Common myeloid progenitor, CD34-positive (primary cell): ENCODE measurements at regions of chr15 and their contacts with region 1.

Region 1: GRCh38 chr15:44711356-44712107 is at the start of gene B2M:
- DNase-seq: peak; percentile 97 to 99 (median 99)
- H3K4me3 ChIP-seq: peak within 1 kb of the TSS; percentile 83 to 100 (median 94)
- H3K27ac ChIP-seq: peak within 1 kb of the TSS; percentile 97 to 99
- H3K4me1 ChIP-seq: peaks cover 18 to 49% (median 29%) of the 10 kb centered on the region in 4 experiments
- H3K27me3 ChIP-seq: no peaks in the 10 kb centered on the region

Region 2: DNA sequence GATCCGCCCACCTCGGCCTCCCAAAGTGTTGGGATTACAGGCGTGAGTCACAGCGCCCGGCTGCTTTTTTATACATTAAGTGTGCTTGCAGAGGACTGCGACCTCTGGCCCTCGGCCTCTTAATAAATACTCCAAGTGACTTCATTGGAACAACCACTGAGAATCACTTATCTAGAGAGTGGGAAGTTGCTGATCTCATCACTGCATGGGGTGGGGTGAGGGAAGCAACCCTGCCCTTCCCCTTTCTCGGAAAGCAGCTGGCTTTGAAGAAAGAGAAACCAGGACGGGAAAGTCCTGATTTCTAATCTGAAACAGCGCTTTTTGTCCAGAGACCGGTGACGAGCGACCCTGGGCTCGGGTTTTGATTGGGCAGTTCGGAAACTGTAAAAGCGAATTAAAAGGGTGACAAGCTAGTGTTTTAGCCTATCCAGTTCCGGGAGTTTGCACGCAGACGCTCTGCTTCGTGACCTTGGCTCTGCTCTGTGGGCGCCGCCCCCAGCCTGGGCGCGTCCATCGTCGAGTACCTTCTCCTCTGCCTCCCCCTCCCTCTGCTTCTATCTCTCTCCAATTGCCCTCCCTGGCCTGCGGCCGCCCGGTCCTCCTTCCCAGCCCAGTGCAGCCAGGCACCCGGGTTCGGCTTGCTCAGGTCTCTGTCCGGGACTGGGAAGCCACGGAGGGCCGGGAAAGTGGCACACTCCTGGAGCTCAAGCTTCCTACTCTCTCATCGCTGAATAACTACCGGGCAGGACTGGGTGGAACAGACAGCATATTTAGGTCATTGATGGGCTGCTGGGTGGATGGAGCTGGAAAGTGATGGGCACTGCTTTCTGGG is 17.3 kb after region 1 on chr15:
- CTCF ChIA-PET with region 1: interaction called, 93 read pairs
- POLR2A ChIA-PET with region 1: interaction called, 106 read pairs
- DNase-seq: peak; percentile 98 to 99 (median 99)
- H3K4me3 ChIP-seq: peak overlapping the region; percentile 77 to 94 (median 85)
- H3K27ac ChIP-seq: peak overlapping the region; percentile 72 to 91
- H3K4me1 ChIP-seq: peaks cover 36 to 60% (median 52%) of the 10 kb centered on the region in 4 experiments
- H3K27me3 ChIP-seq: no peaks in the 10 kb centered on the region